Endothelial cell of umbilical vein (primary cell): ENCODE measurements at regions of chr12 and their contacts with region 1.

Region 1: GRCh38 chr12:80195074-80195726 is 95.9 kb downstream of the OTOGL start:
- DNase-seq: peak; percentile 79
- H3K4me3 ChIP-seq: no peak overlapping the region
- H3K27ac ChIP-seq: no peak overlapping the region
- H3K4me1 ChIP-seq: no peaks in the 10 kb centered on the region
- H3K27me3 ChIP-seq: no peaks in the 10 kb centered on the region
- CTCF ChIP-seq: peak; percentile 70 to 74
- POLR2A ChIP-seq: no peak

Region 2: GRCh38 chr12:79407671-79408622 is 787.3 kb before region 1 on chr12:
- CTCF ChIA-PET with region 1: interaction called, 12 read pairs
- POLR2A ChIA-PET with region 1: no interaction called
- dilution Hi-C with region 1: no loop called
- intact Hi-C with region 1: loop called (anchors 2 kb)
- DNase-seq: peak; percentile 88
- H3K4me3 ChIP-seq: no peak overlapping the region
- H3K27ac ChIP-seq: peak overlapping the region; percentile 25
- H3K4me1 ChIP-seq: peaks cover 9% of the 10 kb centered on the region
- H3K27me3 ChIP-seq: no peaks in the 10 kb centered on the region
- CTCF ChIP-seq: peak; percentile 72 to 86
- POLR2A ChIP-seq: no peak

Region 3: DNA sequence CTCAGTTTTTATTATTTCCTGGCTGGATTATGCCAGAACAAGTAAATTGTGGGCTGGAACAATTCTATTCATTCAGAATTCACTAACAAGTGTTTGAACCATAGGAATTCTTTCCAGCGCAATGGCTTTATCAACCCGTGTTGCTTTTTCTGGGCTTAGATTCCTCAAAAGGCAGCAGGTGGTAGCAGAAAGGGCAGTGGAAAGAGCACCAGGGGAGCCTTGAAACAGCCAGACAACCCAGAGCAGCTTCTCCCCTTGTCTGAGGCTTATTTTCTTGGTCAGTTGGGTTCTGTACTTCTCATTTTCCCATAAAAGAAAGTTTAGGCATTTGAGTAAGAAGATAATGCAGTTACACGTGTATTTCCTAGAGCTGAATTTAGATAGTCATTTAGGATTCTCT is 34.9 kb after region 1 on chr12:
- CTCF ChIA-PET with region 1: interaction called, 16 read pairs
- POLR2A ChIA-PET with region 1: no interaction called
- dilution Hi-C with region 1: no loop called
- intact Hi-C with region 1: no loop called
- DNase-seq: peak; percentile 61
- H3K4me3 ChIP-seq: no peak overlapping the region
- H3K27ac ChIP-seq: no peak overlapping the region
- H3K4me1 ChIP-seq: peaks cover 25% of the 10 kb centered on the region
- H3K27me3 ChIP-seq: no peaks in the 10 kb centered on the region
- CTCF ChIP-seq: no peak
- POLR2A ChIP-seq: no peak

Region 4: GRCh38 chr12:80277732-80278131 is 82.5 kb after region 1 on chr12:
- CTCF ChIA-PET with region 1: interaction called, 25 read pairs
- POLR2A ChIA-PET with region 1: no interaction called
- dilution Hi-C with region 1: no loop called
- intact Hi-C with region 1: no loop called
- DNase-seq: no peak
- H3K4me3 ChIP-seq: no peak overlapping the region
- H3K27ac ChIP-seq: no peak overlapping the region
- H3K4me1 ChIP-seq: no peaks in the 10 kb centered on the region
- H3K27me3 ChIP-seq: no peaks in the 10 kb centered on the region
- CTCF ChIP-seq: no peak
- POLR2A ChIP-seq: no peak

Region 5: DNA sequence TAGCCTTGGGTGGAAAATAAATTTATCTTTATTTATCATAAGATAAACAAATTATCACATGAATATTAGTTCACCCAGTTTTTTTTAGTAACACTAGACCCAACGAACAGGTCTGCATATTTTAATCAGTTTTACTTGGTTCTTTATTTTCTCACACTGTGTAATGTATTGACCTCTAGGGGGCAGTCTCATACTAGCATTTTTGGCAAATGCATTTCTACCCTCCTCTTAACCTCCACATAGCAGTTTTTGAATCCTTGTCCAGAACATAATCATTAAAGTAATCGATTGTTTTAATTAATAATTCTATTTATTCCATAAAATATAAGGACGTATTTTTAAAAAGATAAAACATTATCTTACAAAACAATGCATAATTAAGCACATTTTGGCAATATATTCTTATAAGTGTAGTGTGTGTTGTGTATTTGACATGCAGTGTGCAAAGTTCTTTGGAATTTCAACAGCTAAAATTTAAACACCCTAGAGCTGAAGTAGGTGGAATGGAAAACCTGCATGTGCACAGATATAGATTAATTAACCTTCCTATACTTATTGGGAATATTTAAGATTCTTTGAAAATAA is 217.3 kb after region 1 on chr12:
- CTCF ChIA-PET with region 1: interaction called, 4 read pairs
- POLR2A ChIA-PET with region 1: no interaction called
- dilution Hi-C with region 1: no loop called
- intact Hi-C with region 1: loop called (anchors 1 kb)
- DNase-seq: peak; percentile 56
- H3K4me3 ChIP-seq: no peak overlapping the region
- H3K27ac ChIP-seq: no peak overlapping the region
- H3K4me1 ChIP-seq: no peaks in the 10 kb centered on the region
- H3K27me3 ChIP-seq: no peaks in the 10 kb centered on the region
- CTCF ChIP-seq: peak; percentile 33 to 48
- POLR2A ChIP-seq: no peak

Region 6: DNA sequence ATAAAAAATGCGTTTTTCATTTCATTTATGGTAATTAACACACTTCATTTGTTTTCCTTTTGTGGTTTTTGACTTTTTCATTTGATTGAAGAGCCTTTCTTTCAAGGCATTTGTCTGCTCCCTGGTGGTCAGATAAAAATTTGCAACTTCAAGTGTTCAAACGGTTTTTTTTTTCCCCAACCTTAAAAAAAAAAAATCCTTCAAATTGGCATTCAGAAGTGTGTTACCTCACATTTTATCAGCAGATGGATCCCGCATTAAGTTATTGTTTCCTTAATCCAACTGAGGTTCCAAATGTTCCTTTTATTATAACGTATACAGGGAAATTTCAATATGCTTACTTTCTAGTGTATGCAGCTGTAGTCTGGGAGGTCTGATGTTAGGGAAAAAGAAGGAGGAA is 568.7 kb after region 1 on chr12:
- CTCF ChIA-PET with region 1: interaction called, 34 read pairs
- POLR2A ChIA-PET with region 1: no interaction called
- dilution Hi-C with region 1: no loop called
- intact Hi-C with region 1: loop called (anchors 2 kb)
- DNase-seq: peak; percentile 73
- H3K4me3 ChIP-seq: no peak overlapping the region
- H3K27ac ChIP-seq: no peak overlapping the region
- H3K4me1 ChIP-seq: no peaks in the 10 kb centered on the region
- H3K27me3 ChIP-seq: no peaks in the 10 kb centered on the region
- CTCF ChIP-seq: peak; percentile 28 to 38
- POLR2A ChIP-seq: no peak